HCT116 (cell line): ENCODE measurements at regions of chr19 and their contacts with region 1.

Region 1: GRCh38 chr19:41883821-41884733 is 1.1 kb downstream of the ARHGEF1 start:
- DNase-seq: peak; percentile 94
- ATAC-seq: peak; percentile 86
- H3K4me3 ChIP-seq: peak overlapping the region; percentile 97
- H3K27ac ChIP-seq: peak overlapping the region; percentile 73
- H3K4me1 ChIP-seq: peaks cover 29 to 54% of the 10 kb centered on the region in 2 experiments
- H3K27me3 ChIP-seq: no peaks in the 10 kb centered on the region
- CTCF ChIP-seq: no peak
- POLR2A ChIP-seq: peak; percentile 86
- RAD21 ChIP-seq: no peak

Region 2: GRCh38 chr19:41872775-41873647 is 11.1 kb before region 1 on chr19:
- CTCF ChIA-PET with region 1: interaction called, 14 read pairs
- POLR2A ChIA-PET with region 1: interaction called, 6 read pairs
- RAD21 ChIA-PET with region 1: no interaction called
- intact Hi-C with region 1: no loop called
- DNase-seq: peak; percentile 63
- ATAC-seq: peak; percentile 83
- H3K4me3 ChIP-seq: no peak overlapping the region
- H3K27ac ChIP-seq: peak overlapping the region; percentile 51
- H3K4me1 ChIP-seq: peaks cover 0 to 27% of the 10 kb centered on the region in 2 experiments; a peak in 2 of 4 replicates
- H3K27me3 ChIP-seq: no peaks in the 10 kb centered on the region
- CTCF ChIP-seq: peak; percentile 86 to 94 (median 88)
- POLR2A ChIP-seq: no peak
- RAD21 ChIP-seq: peak; percentile 89

Region 3: GRCh38 chr19:41928221-41928683 is 44.2 kb after region 1 on chr19 and contains the start of gene ERFL:
- CTCF ChIA-PET with region 1: interaction called, 4 read pairs
- POLR2A ChIA-PET with region 1: no interaction called
- RAD21 ChIA-PET with region 1: no interaction called
- intact Hi-C with region 1: loop called (anchors 5 kb)
- DNase-seq: no peak
- ATAC-seq: peak; percentile 60
- H3K4me3 ChIP-seq: peak within 1 kb of the TSS; percentile 52 to 69
- H3K27ac ChIP-seq: peak within 1 kb of the TSS; percentile 29; the same call in 1 of the 2 replicates
- H3K4me1 ChIP-seq: peaks cover 17 to 28% of the 10 kb centered on the region in 2 experiments
- H3K27me3 ChIP-seq: no peaks in the 10 kb centered on the region
- CTCF ChIP-seq: no peak
- POLR2A ChIP-seq: no peak
- RAD21 ChIP-seq: no peak
- total RNA-seq, gene ERFL: 0.79 TPM

Region 4: GRCh38 chr19:41967054-41967783 is 83.1 kb after region 1 on chr19:
- CTCF ChIA-PET with region 1: no interaction called
- POLR2A ChIA-PET with region 1: no interaction called
- RAD21 ChIA-PET with region 1: no interaction called
- intact Hi-C with region 1: no loop called
- DNase-seq: no peak
- ATAC-seq: no peak
- H3K4me3 ChIP-seq: no peak overlapping the region
- H3K27ac ChIP-seq: no peak overlapping the region
- H3K4me1 ChIP-seq: no peaks in the 10 kb centered on the region
- H3K27me3 ChIP-seq: no peaks in the 10 kb centered on the region
- CTCF ChIP-seq: no peak
- POLR2A ChIP-seq: no peak
- RAD21 ChIP-seq: no peak